ENCODE measurements at regions of chr7 and their contacts with region 1.

Region 1: DNA sequence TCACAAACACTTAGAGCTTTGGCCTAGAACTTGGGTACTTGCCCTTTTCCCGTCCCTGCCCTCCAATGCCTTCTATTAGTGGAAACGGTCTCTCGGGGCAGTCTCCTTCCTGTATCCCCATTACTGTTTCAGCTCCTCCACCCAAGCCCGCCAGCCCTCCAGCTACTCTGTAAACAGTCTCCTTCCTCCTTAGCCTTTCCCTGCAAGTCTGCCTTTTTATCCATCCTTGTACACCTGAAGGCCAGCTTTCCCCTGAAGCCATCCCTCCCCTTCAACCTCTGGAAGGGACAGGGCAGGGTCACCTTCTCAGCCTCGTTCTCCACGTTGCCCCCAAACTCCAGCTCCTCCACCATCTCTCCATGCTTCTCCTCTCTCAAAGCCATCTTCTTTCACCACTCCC is 108.1 kb upstream of the ZNF746 start:
- DNase-seq: no peak
- H3K4me3 ChIP-seq: no peak overlapping the region
- H3K27ac ChIP-seq: no peak overlapping the region
- H3K4me1 ChIP-seq: no peaks in the 10 kb centered on the region
- H3K27me3 ChIP-seq: no peaks in the 10 kb centered on the region
- CTCF ChIP-seq: no peak

Region 2: DNA sequence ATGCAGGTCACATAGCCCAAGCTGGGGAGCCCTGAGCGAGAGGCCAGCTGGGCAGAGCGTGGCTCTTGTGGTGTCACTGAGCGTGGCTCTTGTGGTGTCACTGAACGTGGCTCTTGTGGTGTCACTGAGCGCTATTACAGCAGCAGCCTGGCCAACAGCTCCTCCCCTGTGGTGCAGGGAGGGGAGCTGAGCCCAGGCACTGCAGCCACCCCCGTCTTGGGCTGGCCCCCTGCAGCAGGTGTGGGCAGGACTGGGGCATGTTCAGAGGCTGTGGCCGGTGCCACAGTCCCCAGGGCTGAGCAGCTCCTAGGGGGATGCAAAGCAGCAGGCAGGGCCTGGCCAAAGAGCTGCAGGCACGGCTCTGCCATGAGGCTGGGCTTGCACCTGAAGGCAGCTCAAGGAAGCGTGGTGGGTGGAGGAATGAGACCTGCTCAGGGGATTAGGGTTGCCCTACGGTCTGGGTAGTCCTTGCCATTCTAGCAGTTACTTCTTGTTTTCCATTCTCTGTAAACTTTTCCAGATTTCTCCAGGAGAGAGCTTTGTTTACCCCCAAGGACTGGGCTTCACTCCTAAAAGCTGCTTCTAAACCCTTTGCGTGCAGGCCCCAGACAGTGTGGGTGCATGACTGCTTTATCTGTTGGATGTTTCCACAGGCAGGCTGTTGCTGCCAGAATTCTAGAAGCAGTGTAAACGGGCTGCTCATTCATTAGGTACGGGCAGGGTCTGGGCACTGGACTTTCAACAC is 314.5 kb before region 1 on chr7:
- CTCF ChIA-PET with region 1: no interaction called
- POLR2A ChIA-PET with region 1: interaction called, 10 read pairs
- intact Hi-C with region 1: no loop called
- DNase-seq: no peak
- H3K4me3 ChIP-seq: no peak overlapping the region
- H3K27ac ChIP-seq: no peak overlapping the region
- H3K4me1 ChIP-seq: peaks cover 13% of the 10 kb centered on the region
- H3K27me3 ChIP-seq: no peaks in the 10 kb centered on the region
- CTCF ChIP-seq: no peak

Region 3: DNA sequence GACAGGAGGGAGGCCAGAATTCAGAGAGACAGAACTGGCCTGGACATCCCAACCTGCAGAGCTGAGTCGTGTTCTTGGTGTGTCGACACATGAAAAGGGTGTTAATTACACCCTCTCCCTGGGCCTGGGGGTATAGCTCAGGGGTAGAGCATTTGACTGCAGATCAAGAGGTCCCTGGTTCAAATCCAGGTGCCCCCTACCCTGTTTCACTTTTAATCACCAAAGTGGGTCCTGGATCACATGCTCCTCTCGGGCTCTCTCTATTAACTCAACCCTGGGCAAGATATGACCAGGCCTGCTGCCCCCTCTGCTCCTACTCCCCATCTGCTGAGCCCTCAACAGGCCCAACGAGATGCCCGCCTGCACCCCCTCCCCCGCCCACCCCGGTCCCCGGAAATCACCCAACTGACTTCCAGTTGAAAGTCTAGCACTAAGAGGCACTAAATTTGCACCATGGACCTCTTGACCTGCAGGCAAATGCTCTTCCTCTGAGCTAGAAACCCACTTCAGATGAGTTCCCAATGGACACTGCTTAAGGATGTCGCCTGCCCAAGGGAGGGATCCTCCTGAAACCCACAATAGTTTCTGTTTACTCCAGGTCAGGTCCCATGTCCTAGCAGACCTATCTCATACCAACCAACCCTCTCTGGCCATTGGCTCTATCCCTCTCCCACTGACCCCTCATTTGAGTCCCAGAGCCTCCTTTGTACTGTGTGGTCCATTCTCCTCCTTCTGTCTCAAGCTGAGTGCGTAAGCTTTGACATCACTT is 30.0 kb after region 1 on chr7:
- CTCF ChIA-PET with region 1: no interaction called
- POLR2A ChIA-PET with region 1: no interaction called
- intact Hi-C with region 1: no loop called
- DNase-seq: peak in 1 of 2 experiments; percentile 53
- H3K4me3 ChIP-seq: no peak overlapping the region
- H3K27ac ChIP-seq: no peak overlapping the region
- H3K4me1 ChIP-seq: no peaks in the 10 kb centered on the region
- H3K27me3 ChIP-seq: peaks cover 37% of the 10 kb centered on the region
- CTCF ChIP-seq: no peak

Region 4: DNA sequence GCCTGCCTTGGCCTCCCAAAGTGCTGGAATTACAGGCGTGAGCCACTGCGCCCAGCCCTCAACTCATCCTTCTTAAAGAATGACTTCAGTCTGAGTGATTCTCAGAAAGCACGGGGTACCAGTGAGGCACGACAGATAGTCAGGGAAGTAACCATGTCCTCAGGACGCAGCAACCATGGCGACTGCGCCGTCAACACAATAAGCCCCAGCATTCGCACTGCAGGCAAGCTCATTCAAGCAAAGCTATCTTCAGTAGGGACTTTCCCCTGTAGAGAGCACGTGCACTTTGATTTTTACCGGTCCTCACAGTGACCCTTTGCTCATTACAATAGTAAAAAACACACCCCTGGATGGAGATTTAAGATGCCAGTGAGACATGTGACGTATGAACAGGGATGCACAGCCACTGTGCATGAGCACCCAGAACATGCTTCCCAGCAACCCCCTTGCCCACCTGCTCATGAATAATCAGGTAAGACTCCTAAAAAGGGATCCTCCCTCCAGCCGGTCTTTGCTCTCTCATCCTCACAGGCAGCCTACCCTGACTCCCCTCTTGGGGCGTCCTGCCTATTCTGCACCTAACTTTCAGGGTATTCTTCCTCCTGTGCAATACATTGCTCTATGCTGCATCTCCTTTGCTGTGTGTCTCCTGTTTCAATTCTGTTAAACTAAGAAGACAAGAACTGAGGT is 1795.1 kb after region 1 on chr7:
- CTCF ChIA-PET with region 1: no interaction called
- POLR2A ChIA-PET with region 1: no interaction called
- intact Hi-C with region 1: no loop called
- DNase-seq: no peak
- H3K4me3 ChIP-seq: no peak overlapping the region
- H3K27ac ChIP-seq: no peak overlapping the region
- H3K4me1 ChIP-seq: peaks cover 22% of the 10 kb centered on the region
- H3K27me3 ChIP-seq: no peaks in the 10 kb centered on the region
- CTCF ChIP-seq: no peak

Measured in PC-9 (cell line).